ENCODE measurements at regions of chr19 and their contacts with region 1.

Region 1: GRCh38 chr19:6516659-6517291 is 14.1 kb upstream of the TNFSF9 start:
- DNase-seq: peak; percentile 85
- H3K4me3 Mint-ChIP-seq: peak overlapping the region; percentile 94
- H3K27ac Mint-ChIP-seq: peak overlapping the region; percentile 94
- H3K4me1 Mint-ChIP-seq: peaks cover 31% of the 10 kb centered on the region
- H3K27me3 Mint-ChIP-seq: no peaks in the 10 kb centered on the region

Region 2: DNA sequence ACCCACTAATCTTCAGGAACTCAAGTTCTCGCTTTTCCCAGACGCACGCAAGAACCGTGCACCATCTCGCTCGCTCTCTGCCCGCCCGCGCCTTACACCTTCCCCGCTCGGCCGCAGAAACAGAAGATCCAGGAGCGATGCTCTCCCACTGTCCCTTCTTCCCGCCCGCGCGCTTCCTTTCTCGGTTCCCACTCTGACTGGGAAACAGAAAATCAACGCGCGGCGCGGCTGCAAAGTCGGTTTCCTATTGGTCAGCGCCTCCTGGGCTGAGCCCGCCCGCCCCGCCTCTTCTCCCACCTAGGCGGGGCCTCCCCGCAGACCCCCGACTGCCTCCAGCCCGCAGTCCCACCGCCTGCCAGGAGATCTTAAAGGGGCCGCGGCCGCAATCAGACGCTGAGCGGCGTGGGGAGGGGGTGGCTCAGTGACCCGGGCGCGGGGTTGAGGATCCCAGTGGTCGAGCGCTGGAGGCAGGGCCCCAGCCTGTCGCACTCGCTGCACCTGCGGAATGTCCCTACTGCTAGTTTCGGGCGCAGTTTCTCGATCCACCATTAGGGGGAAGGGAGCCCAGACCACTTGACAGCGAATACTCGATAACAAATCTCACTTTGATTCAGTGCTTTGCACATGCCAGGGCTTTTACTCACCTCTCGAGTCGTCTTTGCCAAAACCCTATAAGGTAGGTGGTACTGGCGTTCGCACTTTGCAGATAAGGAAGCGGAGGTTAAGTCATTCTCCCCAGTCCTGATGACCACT is 56.5 kb before region 1 on chr19:
- intact Hi-C with region 1: loop called (anchors 1 kb)
- DNase-seq: peak; percentile 97
- H3K4me3 Mint-ChIP-seq: peak overlapping the region; percentile 88
- H3K27ac Mint-ChIP-seq: peak overlapping the region; percentile 44
- H3K4me1 Mint-ChIP-seq: peaks cover 8% of the 10 kb centered on the region
- H3K27me3 Mint-ChIP-seq: no peaks in the 10 kb centered on the region

Region 3: GRCh38 chr19:6501740-6502648 is 14.8 kb before region 1 on chr19 and contains the start of gene TUBB4A:
- intact Hi-C with region 1: no loop called
- DNase-seq: peak; percentile 42
- H3K4me3 Mint-ChIP-seq: peak within 1 kb of the TSS; percentile 80
- H3K27ac Mint-ChIP-seq: no peak within 1 kb of the TSS
- H3K4me1 Mint-ChIP-seq: peaks cover 19% of the 10 kb centered on the region
- H3K27me3 Mint-ChIP-seq: peaks cover 6% of the 10 kb centered on the region
- total RNA-seq, gene TUBB4A: 7.9 and 11.3 TPM in 2 replicates

Region 4: GRCh38 chr19:6556480-6557195 is 39.9 kb after region 1 on chr19:
- intact Hi-C with region 1: loop called (anchors 5 kb)
- DNase-seq: no peak
- H3K4me3 Mint-ChIP-seq: no peak overlapping the region
- H3K27ac Mint-ChIP-seq: no peak overlapping the region
- H3K4me1 Mint-ChIP-seq: peaks cover 11% of the 10 kb centered on the region
- H3K27me3 Mint-ChIP-seq: peaks cover 6% of the 10 kb centered on the region

Region 5: GRCh38 chr19:6572217-6572616 is 55.4 kb after region 1 on chr19:
- intact Hi-C with region 1: no loop called
- DNase-seq: no peak
- H3K4me3 Mint-ChIP-seq: no peak overlapping the region
- H3K27ac Mint-ChIP-seq: no peak overlapping the region
- H3K4me1 Mint-ChIP-seq: peaks cover 2% of the 10 kb centered on the region
- H3K27me3 Mint-ChIP-seq: peaks cover 22% of the 10 kb centered on the region

Region 6: DNA sequence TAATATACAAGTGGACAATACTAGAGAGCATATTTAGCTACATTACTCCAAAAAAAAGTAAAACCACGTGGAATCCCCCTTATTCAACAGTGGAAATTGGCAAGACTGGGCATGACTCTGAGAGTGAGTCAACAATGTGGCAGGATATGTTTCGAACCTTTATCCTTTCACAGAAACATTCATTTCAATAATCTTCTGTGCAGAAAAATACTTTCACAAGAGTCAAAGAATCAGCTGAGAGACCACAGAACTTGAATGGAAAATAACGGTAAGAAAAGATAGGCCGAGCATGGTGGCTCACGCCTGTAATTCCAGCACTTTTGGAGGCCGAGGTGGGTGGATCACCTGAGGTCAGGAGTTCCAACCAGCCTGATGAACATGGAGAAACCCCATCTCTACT is 99.2 kb after region 1 on chr19:
- intact Hi-C with region 1: loop called (anchors 1 kb)
- DNase-seq: no peak
- H3K4me3 Mint-ChIP-seq: no peak overlapping the region
- H3K27ac Mint-ChIP-seq: peak overlapping the region; percentile 66
- H3K4me1 Mint-ChIP-seq: peaks cover 31% of the 10 kb centered on the region
- H3K27me3 Mint-ChIP-seq: peaks cover 10% of the 10 kb centered on the region

Region 7: DNA sequence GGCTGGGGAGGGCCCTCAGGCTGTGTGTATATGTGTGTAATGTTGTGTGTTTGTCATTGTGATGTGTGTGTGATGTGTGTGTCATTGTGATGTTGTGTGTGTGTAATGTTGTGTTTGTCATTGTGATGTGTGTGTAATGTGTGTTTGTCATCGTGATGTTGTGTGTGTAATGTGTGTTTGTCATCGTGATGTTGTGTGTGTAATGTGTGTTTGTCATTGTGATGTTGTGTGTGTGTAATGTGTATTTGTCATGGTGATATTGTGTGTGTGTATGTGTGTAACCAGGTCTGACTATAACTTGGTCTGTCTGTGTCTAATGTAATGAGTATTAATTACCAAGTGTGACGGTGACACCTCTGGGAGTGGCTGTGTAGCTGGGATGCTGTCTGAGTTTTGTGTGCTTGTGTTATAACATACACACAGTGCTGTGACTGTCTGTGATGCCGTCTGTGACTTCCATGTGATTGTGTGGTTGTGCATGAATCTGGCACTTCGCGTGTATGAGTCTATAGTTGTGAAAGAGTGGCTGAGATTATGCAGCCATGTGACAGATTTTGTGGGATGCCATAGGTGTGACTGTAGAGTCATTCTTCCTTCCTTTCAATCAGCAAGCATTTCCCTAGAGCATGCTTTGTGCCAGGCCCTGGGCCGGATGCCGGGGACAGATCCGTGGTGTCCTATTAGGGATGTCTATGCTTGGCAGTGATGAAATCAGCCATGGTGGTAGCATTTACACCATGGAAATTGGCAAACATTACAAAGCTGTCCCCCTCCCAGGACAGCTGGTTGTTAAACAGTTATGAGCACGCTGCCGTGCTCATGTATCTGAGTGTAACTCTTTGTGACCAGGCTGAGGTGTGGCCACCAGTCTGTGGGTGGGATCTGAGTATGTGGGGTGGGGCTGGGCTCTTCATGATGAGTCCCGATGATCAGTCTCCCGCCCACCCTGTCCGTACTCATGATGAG is 146.7 kb after region 1 on chr19:
- intact Hi-C with region 1: loop called (anchors 2 kb)
- DNase-seq: no peak
- H3K4me3 Mint-ChIP-seq: no peak overlapping the region
- H3K27ac Mint-ChIP-seq: no peak overlapping the region
- H3K4me1 Mint-ChIP-seq: peaks cover 43% of the 10 kb centered on the region
- H3K27me3 Mint-ChIP-seq: no peaks in the 10 kb centered on the region

Region 8: GRCh38 chr19:6753178-6754031 is 236.6 kb after region 1 on chr19:
- intact Hi-C with region 1: loop called (anchors 5 kb)
- DNase-seq: peak; percentile 79
- H3K4me3 Mint-ChIP-seq: peak overlapping the region; percentile 70
- H3K27ac Mint-ChIP-seq: peak overlapping the region; percentile 92
- H3K4me1 Mint-ChIP-seq: peaks cover 3% of the 10 kb centered on the region
- H3K27me3 Mint-ChIP-seq: no peaks in the 10 kb centered on the region

Region 9: GRCh38 chr19:6862673-6863078 is 345.9 kb after region 1 on chr19:
- intact Hi-C with region 1: loop called (anchors 1 kb)
- DNase-seq: peak; percentile 87
- H3K4me3 Mint-ChIP-seq: peak overlapping the region; percentile 72
- H3K27ac Mint-ChIP-seq: peak overlapping the region; percentile 66
- H3K4me1 Mint-ChIP-seq: peaks cover 12% of the 10 kb centered on the region
- H3K27me3 Mint-ChIP-seq: no peaks in the 10 kb centered on the region

Measured in activated T-helper 2 cell treated with anti-CD3 and anti-CD28 coated beads, Interferon-gamma antibody, Interleukin-2, Interleukin-4, amounts not matched to agents 10 μg/mL and 5 μg/mL and 100 μg/mL, durations not matched to agents 14 hours and 24 hours and 36 hours (primary cell).